Activated naive CD8-positive, alpha-beta T cell treated with anti-CD3 and anti-CD28 coated beads, Interleukin-2, amount 10 ng/mL, durations not matched to agents 7 days and 5 days (primary cell): ENCODE measurements at regions of chr17 and their contacts with region 1.

Region 1: DNA sequence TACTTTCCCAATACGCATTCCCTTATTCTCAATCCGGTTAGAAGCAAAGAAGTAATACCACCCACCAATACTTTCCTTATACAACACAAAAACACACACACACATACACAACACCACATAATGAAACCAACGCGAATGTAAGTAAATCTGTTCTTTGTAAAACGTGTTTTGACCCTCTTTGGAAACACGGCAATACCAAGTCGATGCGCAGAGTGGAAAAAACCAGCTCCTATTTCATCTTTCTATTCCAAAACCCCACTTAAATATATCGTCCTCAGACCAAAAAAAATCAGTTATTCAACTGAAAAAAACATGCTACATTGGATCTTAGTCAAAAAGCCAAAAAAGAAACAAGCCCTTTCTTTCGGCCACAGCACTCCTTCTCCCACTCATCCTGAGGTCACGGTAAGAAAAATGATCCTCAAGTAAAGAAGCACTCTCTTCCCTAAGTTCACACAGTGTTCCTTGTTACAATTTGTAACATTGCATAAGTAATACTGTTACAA is 31.0 kb upstream of the ARL4D start:
- DNase-seq: no peak
- ATAC-seq: peak; percentile 46
- H3K4me3 Mint-ChIP-seq: peak overlapping the region; percentile 88
- H3K27ac Mint-ChIP-seq: peak overlapping the region; percentile 100
- H3K4me1 Mint-ChIP-seq: peaks cover 36% of the 10 kb centered on the region
- H3K27me3 Mint-ChIP-seq: no peaks in the 10 kb centered on the region

Region 2: GRCh38 chr17:42997984-42998938 is 369.5 kb before region 1 on chr17 and contains the start of gene RPL27:
- POLR2A ChIA-PET with region 1: interaction called, 10 read pairs
- DNase-seq: peak; percentile 91
- ATAC-seq: peak; percentile 98
- H3K4me3 Mint-ChIP-seq: peak within 1 kb of the TSS; percentile 92
- H3K27ac Mint-ChIP-seq: peak within 1 kb of the TSS; percentile 84
- H3K4me1 Mint-ChIP-seq: peaks cover 27% of the 10 kb centered on the region
- H3K27me3 Mint-ChIP-seq: no peaks in the 10 kb centered on the region
- total RNA-seq, gene RPL27: 1,039 to 1,066 TPM

Region 3: DNA sequence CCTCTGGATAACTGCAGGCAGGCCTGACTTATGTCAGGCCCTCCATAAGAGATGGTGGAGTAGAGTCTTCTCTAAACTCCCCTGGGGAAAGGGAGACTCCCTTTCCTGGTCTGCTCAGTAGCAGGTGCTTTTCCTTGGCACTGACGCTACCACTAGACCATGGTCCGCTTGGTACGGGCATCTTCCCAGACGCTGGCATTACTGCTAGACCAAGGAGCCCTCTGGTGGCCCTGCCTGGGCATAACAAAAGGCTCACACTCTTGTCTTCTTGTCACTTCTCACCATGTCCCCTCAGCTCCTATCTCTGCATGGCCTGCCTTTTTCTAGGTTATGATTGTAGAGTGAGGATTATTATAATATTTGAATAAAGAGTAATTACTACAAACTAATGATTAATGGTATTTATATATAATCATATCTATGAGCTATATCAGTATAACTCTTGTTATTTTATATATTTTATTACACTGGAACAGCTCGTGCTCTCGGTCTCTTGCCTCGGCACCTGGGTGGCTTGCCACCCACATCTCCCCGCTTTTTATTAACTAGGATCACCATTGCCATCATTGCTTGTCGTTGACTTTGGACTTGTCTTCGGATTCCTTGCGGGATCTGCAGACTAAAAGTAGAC is 28.8 kb before region 1 on chr17:
- POLR2A ChIA-PET with region 1: interaction called, 11 read pairs
- DNase-seq: peak; percentile 61
- ATAC-seq: no peak
- H3K4me3 Mint-ChIP-seq: no peak overlapping the region
- H3K27ac Mint-ChIP-seq: no peak overlapping the region
- H3K4me1 Mint-ChIP-seq: peaks cover 9% of the 10 kb centered on the region
- H3K27me3 Mint-ChIP-seq: no peaks in the 10 kb centered on the region

Region 4: GRCh38 chr17:43388359-43389045 is 20.7 kb after region 1 on chr17:
- POLR2A ChIA-PET with region 1: interaction called, 317 read pairs
- DNase-seq: peak; percentile 96
- ATAC-seq: peak; percentile 61
- H3K4me3 Mint-ChIP-seq: peak overlapping the region; percentile 90
- H3K27ac Mint-ChIP-seq: peak overlapping the region; percentile 98
- H3K4me1 Mint-ChIP-seq: peaks cover 13% of the 10 kb centered on the region
- H3K27me3 Mint-ChIP-seq: no peaks in the 10 kb centered on the region

Region 5: DNA sequence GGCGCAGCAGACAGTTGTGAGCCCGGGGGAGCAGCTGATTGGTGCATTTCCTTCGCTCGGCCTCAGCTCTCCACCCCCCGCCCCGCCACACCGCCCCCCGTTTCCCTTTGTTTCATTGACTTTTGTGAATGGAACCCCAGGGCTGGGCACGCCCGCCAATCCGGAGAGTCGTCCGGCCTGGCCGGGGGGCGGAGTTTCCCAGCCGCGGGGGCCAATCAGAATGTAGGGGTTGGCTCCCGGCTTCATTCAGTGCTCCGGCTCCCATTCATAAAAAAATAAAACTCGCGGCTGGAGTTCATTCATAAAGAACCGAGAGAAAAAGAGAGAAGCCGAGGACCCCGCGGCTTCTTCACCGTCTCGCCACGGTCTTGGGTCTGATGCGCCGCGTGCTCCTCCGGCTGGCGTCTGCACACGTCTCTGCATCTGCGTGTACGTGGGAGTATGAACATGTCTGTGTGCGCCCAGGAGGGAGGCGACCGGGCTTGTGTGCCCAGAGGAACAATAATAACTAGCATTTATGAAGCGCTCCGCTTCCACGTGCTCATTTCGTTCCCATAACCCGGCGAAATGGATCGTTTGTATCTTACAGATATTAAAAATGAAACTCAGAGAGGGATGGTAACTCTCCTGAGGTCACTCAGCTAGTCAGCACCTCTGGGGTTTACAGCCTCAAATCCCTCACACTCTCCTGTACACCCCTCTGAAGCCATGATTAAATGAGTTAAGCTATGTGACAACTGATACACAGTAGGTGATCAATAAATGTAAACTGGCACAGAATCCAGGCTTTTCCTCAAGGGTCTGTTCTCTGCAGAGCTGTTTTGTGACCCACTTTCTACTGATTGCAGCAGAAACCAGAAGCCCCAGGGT is 178.8 kb after region 1 on chr17 and contains the start of gene ETV4:
- POLR2A ChIA-PET with region 1: interaction called, 10 read pairs
- DNase-seq: peak; percentile 93
- ATAC-seq: peak; percentile 87
- H3K4me3 Mint-ChIP-seq: peak within 1 kb of the TSS; percentile 81
- H3K27ac Mint-ChIP-seq: no peak within 1 kb of the TSS
- H3K4me1 Mint-ChIP-seq: peaks cover 17% of the 10 kb centered on the region
- H3K27me3 Mint-ChIP-seq: peaks cover 47% of the 10 kb centered on the region
- total RNA-seq, gene ETV4: 1.6 TPM